Breast epithelium (tissue), 4 donors: ENCODE measurements at regions of chr12 and their contacts with region 1.

Region 1: DNA sequence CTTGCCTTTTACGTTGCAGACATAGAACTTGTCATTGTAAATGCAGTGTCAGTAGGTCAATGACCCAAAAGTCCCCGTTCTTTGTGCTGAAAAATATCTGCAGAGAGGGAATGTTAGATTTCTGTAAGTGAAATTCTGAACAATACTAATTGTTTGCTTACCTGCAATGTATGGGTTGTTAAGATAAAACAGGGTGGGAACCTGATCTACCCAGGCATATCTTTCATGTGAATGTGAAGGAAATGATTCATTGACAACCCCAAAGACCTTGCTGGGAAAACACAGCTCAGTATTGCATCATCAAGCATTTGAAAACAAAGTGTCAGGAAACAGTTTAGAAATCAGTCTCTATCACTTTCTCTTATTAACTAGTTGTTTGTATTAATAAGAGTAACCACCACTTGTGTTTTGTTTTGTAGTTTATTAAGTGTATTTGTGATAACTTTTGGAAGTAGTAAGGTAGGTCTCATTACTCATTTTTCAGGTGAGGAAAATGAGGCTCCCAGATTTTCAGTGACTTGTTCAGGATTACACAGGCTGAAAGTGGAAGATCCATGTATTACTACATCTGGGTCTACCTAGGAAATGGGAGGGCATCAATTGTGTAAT is 57.9 kb upstream of the SLC38A2 start:
- DNase-seq: no peak
- H3K4me3 ChIP-seq: no peak overlapping the region
- H3K27ac ChIP-seq: peak overlapping the region in 1 of 2 donors; percentile 60
- H3K4me1 ChIP-seq: no peaks in the 10 kb centered on the region
- H3K27me3 ChIP-seq: no peaks in the 10 kb centered on the region
- CTCF ChIP-seq: no peak
- POLR2A ChIP-seq: no peak

Region 2: GRCh38 chr12:48350249-48351021 is 1920.0 kb after region 1 on chr12 and contains the start of gene ZNF641:
- intact Hi-C with region 1: loop called (anchors 10 kb)
- DNase-seq: peak; percentile 53 to 66
- H3K4me3 ChIP-seq: peak within 1 kb of the TSS; percentile 73 to 95 (median 89)
- H3K27ac ChIP-seq: peak within 1 kb of the TSS; percentile 96 to 99
- H3K4me1 ChIP-seq: peaks cover 0 to 3% of the 10 kb centered on the region in 2 donors
- H3K27me3 ChIP-seq: no peaks in the 10 kb centered on the region
- CTCF ChIP-seq: no peak
- POLR2A ChIP-seq: peak; percentile 5
- total RNA-seq, gene ZNF641: 22.9 to 33.8 (median 23.4) TPM